Heart right ventricle (tissue), 16 donors: ENCODE measurements at regions of chr16 and their contacts with region 1.

Region 1: DNA sequence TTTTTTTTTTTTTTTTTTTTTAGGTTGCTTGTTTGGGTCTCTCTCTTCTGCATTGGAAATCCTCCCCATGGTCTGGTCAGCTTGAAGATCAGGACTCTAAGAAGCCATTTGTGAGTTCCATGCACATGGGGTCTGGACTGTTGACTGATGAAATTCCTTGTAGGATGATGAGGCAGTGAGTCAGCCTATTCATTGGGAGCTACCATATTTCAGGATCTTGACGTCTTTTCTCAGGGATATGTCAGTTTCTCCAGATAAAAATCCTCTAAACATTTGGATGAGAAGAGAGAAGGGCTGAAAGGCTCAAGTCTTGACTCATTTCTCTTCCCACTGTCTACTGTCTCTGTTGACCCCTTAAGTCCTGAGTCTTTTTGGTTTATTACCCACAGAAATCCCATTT is 332.9 kb upstream of the XYLT1 start:
- DNase-seq: no peak
- ATAC-seq: no peak
- H3K4me3 ChIP-seq: no peak overlapping the region
- H3K27ac ChIP-seq: no peak overlapping the region
- H3K4me1 ChIP-seq: no peaks in the 10 kb centered on the region
- H3K27me3 ChIP-seq: peaks cover 0 to 42% (median 5%) of the 10 kb centered on the region in 7 donors
- CTCF ChIP-seq: no peak

Region 2: DNA sequence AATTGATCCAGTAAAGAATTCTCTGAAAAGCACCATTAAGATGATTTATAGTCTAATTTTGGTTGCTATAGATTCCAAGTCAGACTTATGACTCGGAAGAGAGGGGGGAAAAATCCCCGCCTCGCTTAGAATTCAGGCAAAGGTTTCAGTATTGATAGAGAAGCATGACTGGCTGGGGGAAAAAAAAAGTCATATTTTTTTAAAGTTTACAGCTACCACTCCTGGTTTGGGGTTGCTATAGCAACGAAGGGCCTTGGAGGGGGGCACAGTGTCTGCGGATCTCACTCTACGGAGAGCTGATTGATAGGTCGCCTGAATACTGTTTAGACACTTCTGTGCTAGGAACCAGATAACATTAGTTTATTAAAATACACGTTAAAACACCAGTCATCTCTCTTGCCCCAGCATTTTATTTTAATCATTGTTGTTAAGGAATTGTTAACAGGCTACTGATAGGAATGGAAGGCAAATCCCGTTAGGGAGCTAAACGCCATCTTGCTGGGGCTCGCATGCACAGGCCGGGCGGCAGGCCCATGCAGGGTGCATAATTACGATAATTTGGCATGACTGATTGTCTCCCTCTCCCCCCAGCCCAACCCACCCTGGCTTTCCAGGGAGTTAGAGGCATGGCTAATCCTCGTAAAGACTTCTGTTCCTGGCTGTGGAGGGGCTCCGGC is 47.1 kb after region 1 on chr16:
- intact Hi-C with region 1: loop called in 1 of 10 experiments (anchors 10 kb)
- DNase-seq: no peak
- ATAC-seq: no peak
- H3K4me3 ChIP-seq: no peak overlapping the region
- H3K27ac ChIP-seq: no peak overlapping the region
- H3K4me1 ChIP-seq: no peaks in the 10 kb centered on the region
- H3K27me3 ChIP-seq: peaks cover 0 to 9% (median 0%) of the 10 kb centered on the region in 7 donors
- CTCF ChIP-seq: no peak

Region 3: GRCh38 chr16:17866996-17867395 is 63.4 kb after region 1 on chr16:
- intact Hi-C with region 1: loop called in 1 of 10 experiments (anchors 10 kb)
- DNase-seq: no peak
- ATAC-seq: no peak
- H3K4me3 ChIP-seq: no peak overlapping the region
- H3K27ac ChIP-seq: no peak overlapping the region
- H3K4me1 ChIP-seq: no peaks in the 10 kb centered on the region
- H3K27me3 ChIP-seq: peaks cover 0 to 4% (median 0%) of the 10 kb centered on the region in 7 donors
- CTCF ChIP-seq: no peak